B cell (primary cell): ENCODE measurements at regions of chr2 and their contacts with region 1.

Region 1: GRCh38 chr2:202634556-202635427 is at the start of gene FAM117B:
- DNase-seq: peak; percentile 98
- ATAC-seq: peak; percentile 86
- H3K4me3 ChIP-seq: peak within 1 kb of the TSS; percentile 73 to 98 (median 87)
- H3K4me3 Mint-ChIP-seq: peak within 1 kb of the TSS; percentile 99
- H3K27ac ChIP-seq: peak within 1 kb of the TSS; percentile 87 to 93
- H3K27ac Mint-ChIP-seq: peak within 1 kb of the TSS; percentile 100
- H3K4me1 ChIP-seq: peaks cover 40 to 43% of the 10 kb centered on the region in 2 donors
- H3K4me1 Mint-ChIP-seq: peaks cover 46% of the 10 kb centered on the region
- H3K27me3 ChIP-seq: no peaks in the 10 kb centered on the region
- H3K27me3 Mint-ChIP-seq: no peaks in the 10 kb centered on the region
- CTCF ChIP-seq: no peak
- total RNA-seq, gene FAM117B: 50.1 and 50.4 TPM in 2 replicates

Region 2: DNA sequence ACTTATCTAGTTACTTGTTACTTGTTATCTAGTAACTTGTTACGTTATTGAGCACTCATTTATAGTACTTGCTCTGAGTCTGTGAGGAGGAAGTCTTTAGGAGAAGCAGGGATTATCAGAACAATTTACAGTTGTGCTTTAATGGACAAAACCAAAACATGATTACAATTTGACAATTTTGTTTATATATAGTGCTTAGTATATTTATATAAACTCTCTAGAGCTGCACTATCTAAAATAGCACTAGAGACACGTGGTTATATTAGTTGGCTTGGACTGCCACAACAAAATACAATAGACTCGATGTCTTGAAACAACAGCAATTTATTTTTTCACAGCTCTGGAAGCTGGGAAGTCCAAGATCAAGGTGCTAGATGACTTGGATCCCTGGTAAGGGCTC is 180.3 kb before region 1 on chr2:
- CTCF ChIA-PET with region 1: no interaction called
- POLR2A ChIA-PET with region 1: no interaction called
- intact Hi-C with region 1: no loop called
- DNase-seq: no peak
- ATAC-seq: no peak
- H3K4me3 ChIP-seq: no peak overlapping the region
- H3K4me3 Mint-ChIP-seq: no peak overlapping the region
- H3K27ac ChIP-seq: no peak overlapping the region
- H3K27ac Mint-ChIP-seq: no peak overlapping the region
- H3K4me1 ChIP-seq: no peaks in the 10 kb centered on the region
- H3K4me1 Mint-ChIP-seq: peaks cover 4% of the 10 kb centered on the region
- H3K27me3 ChIP-seq: no peaks in the 10 kb centered on the region
- H3K27me3 Mint-ChIP-seq: no peaks in the 10 kb centered on the region
- CTCF ChIP-seq: no peak

Region 3: DNA sequence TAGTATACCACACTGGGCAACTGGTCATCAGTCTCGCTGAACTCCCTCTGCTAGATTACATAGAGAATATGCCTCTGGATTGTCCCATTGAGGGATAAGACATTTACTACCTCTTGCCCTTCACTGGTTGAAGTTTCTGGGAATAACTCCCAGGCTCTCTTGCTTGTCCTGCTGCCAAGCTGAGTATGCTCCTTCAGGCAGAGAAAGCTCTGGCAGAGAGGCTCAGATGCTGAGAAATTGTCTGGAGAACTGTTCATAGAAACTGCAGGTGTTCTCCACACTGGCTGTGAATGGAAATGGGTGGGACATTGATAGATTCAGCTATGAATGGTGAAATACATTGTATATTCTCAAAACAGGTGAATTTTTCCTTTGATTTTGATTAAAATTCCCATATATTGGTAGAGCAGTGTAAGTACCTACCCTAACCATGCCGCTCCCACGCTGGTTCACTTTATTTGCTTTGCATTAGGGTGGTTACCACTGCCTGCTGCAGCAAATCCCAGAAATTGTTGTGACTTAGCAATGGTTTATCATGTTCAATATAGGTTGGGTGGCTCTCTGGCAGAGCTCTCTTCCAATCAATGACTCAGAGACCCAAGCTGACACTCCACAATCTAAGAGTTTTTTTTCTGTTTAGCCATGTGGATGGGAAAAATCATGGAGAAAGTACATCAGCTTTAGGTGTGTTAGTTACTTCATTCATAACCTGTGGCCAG is 36.7 kb after region 1 on chr2:
- CTCF ChIA-PET with region 1: interaction called, 17 read pairs
- POLR2A ChIA-PET with region 1: interaction called, 35 read pairs
- intact Hi-C with region 1: loop called (anchors 1 kb)
- DNase-seq: no peak
- ATAC-seq: no peak
- H3K4me3 ChIP-seq: peak overlapping the region in 1 of 5 experiments; percentile 27
- H3K4me3 Mint-ChIP-seq: peak overlapping the region; percentile 5
- H3K27ac ChIP-seq: peak overlapping the region; percentile 16 to 67
- H3K27ac Mint-ChIP-seq: peak overlapping the region; percentile 90
- H3K4me1 ChIP-seq: peaks cover 82 to 83% of the 10 kb centered on the region in 2 donors
- H3K4me1 Mint-ChIP-seq: peaks cover 77% of the 10 kb centered on the region
- H3K27me3 ChIP-seq: no peaks in the 10 kb centered on the region
- H3K27me3 Mint-ChIP-seq: no peaks in the 10 kb centered on the region
- CTCF ChIP-seq: no peak

Region 4: DNA sequence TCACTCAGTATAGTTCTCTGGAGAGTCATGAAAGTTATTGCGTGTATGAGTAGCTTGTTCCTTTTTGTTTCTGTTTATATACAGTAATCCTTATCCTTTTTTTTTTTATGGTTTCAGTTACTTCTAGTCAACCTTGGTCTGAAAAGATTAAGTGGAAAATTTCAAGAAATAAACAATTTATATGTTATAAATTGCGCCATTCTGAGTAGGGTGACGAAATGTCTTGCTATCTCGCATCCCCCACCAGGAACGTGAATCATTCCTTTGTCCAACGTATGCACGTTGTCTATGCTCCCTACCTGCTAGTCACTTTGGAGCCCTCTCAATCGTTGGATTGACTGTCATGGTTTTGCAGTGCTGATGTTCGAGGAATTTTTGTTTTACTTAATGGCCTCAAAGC is 60.4 kb after region 1 on chr2:
- CTCF ChIA-PET with region 1: interaction called, 15 read pairs
- POLR2A ChIA-PET with region 1: interaction called, 12 read pairs
- intact Hi-C with region 1: no loop called
- DNase-seq: no peak
- ATAC-seq: no peak
- H3K4me3 ChIP-seq: no peak overlapping the region
- H3K4me3 Mint-ChIP-seq: no peak overlapping the region
- H3K27ac ChIP-seq: peak overlapping the region in 1 of 2 donors; percentile 34
- H3K27ac Mint-ChIP-seq: no peak overlapping the region
- H3K4me1 ChIP-seq: peaks cover 6 to 19% of the 10 kb centered on the region in 2 donors
- H3K4me1 Mint-ChIP-seq: peaks cover 45% of the 10 kb centered on the region
- H3K27me3 ChIP-seq: no peaks in the 10 kb centered on the region
- H3K27me3 Mint-ChIP-seq: no peaks in the 10 kb centered on the region
- CTCF ChIP-seq: no peak

Region 5: DNA sequence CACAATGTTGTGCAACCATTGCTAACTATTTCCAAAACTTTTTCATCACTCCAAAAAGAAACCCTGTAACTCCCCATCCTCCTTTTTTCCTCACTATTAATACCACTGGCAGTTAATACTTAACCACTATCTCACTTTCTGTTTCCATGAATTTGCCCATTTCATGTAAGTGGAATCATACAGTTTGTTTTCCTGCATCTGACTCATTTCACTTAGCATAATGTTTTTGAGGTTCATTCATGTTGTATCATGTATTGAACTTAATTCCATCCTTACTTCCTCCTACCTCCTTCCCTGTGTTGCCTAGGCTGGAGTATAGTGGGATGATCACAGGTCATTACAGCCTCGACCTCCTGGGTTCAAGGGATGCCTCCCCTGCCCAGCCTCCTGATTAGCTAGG is 68.3 kb after region 1 on chr2:
- CTCF ChIA-PET with region 1: interaction called, 15 read pairs
- POLR2A ChIA-PET with region 1: interaction called, 5 read pairs
- intact Hi-C with region 1: no loop called
- DNase-seq: no peak
- ATAC-seq: no peak
- H3K4me3 ChIP-seq: no peak overlapping the region
- H3K4me3 Mint-ChIP-seq: no peak overlapping the region
- H3K27ac ChIP-seq: peak overlapping the region in 1 of 2 donors; percentile 12
- H3K27ac Mint-ChIP-seq: peak overlapping the region; percentile 3
- H3K4me1 ChIP-seq: peaks cover 13 to 26% of the 10 kb centered on the region in 2 donors
- H3K4me1 Mint-ChIP-seq: peaks cover 55% of the 10 kb centered on the region
- H3K27me3 ChIP-seq: no peaks in the 10 kb centered on the region
- H3K27me3 Mint-ChIP-seq: no peaks in the 10 kb centered on the region
- CTCF ChIP-seq: no peak

Region 6: GRCh38 chr2:202718614-202719013 is 83.8 kb after region 1 on chr2:
- CTCF ChIA-PET with region 1: interaction called, 10 read pairs
- POLR2A ChIA-PET with region 1: interaction called, 3 read pairs
- intact Hi-C with region 1: no loop called
- DNase-seq: no peak
- ATAC-seq: no peak
- H3K4me3 ChIP-seq: no peak overlapping the region
- H3K4me3 Mint-ChIP-seq: no peak overlapping the region
- H3K27ac ChIP-seq: peak overlapping the region in 1 of 2 donors; percentile 4
- H3K27ac Mint-ChIP-seq: peak overlapping the region; percentile 8
- H3K4me1 ChIP-seq: peaks cover 11 to 20% of the 10 kb centered on the region in 2 donors
- H3K4me1 Mint-ChIP-seq: peaks cover 44% of the 10 kb centered on the region
- H3K27me3 ChIP-seq: no peaks in the 10 kb centered on the region
- H3K27me3 Mint-ChIP-seq: no peaks in the 10 kb centered on the region
- CTCF ChIP-seq: no peak

Region 7: GRCh38 chr2:202911512-202912341 is 276.9 kb after region 1 on chr2 and contains the starts of genes CARF and WDR12:
- CTCF ChIA-PET with region 1: no interaction called
- POLR2A ChIA-PET with region 1: no interaction called
- intact Hi-C with region 1: loop called (anchors 2 kb)
- DNase-seq: peak; percentile 96
- ATAC-seq: peak; percentile 81
- H3K4me3 ChIP-seq: peak within 1 kb of the TSS; percentile 52 to 100 (median 97)
- H3K4me3 Mint-ChIP-seq: peak within 1 kb of the TSS; percentile 99
- H3K27ac ChIP-seq: peak within 1 kb of the TSS; percentile 67 to 83
- H3K27ac Mint-ChIP-seq: peak within 1 kb of the TSS; percentile 99
- H3K4me1 ChIP-seq: peaks cover 5 to 11% of the 10 kb centered on the region in 2 donors
- H3K4me1 Mint-ChIP-seq: peaks cover 24% of the 10 kb centered on the region
- H3K27me3 ChIP-seq: no peaks in the 10 kb centered on the region
- H3K27me3 Mint-ChIP-seq: no peaks in the 10 kb centered on the region
- CTCF ChIP-seq: no peak
- total RNA-seq, gene CARF: 27.5 and 28.4 TPM in 2 replicates
- total RNA-seq, gene WDR12: 17.4 and 20.8 TPM in 2 replicates

Region 8: GRCh38 chr2:203014456-203015199 is 379.8 kb after region 1 on chr2 and contains the start of gene NBEAL1:
- CTCF ChIA-PET with region 1: no interaction called
- POLR2A ChIA-PET with region 1: interaction called, 3 read pairs
- intact Hi-C with region 1: loop called (anchors 2 kb)
- DNase-seq: peak; percentile 99
- ATAC-seq: peak; percentile 93
- H3K4me3 ChIP-seq: peak within 1 kb of the TSS; percentile 61 to 99 (median 87)
- H3K4me3 Mint-ChIP-seq: peak within 1 kb of the TSS; percentile 93
- H3K27ac ChIP-seq: peak within 1 kb of the TSS; percentile 87 to 93
- H3K27ac Mint-ChIP-seq: peak within 1 kb of the TSS; percentile 89
- H3K4me1 ChIP-seq: peaks cover 15 to 17% of the 10 kb centered on the region in 2 donors
- H3K4me1 Mint-ChIP-seq: peaks cover 35% of the 10 kb centered on the region
- H3K27me3 ChIP-seq: no peaks in the 10 kb centered on the region
- H3K27me3 Mint-ChIP-seq: no peaks in the 10 kb centered on the region
- CTCF ChIP-seq: no peak
- total RNA-seq, gene NBEAL1: 22.0 and 22.5 TPM in 2 replicates